MCF 10A (cell line): ENCODE measurements at regions of chr16 and their contacts with region 1.

Region 1: GRCh38 chr16:69105489-69106361 is at the start of gene HAS3:
- DNase-seq: peak; percentile 81
- H3K4me3 Mint-ChIP-seq: peak within 1 kb of the TSS; percentile 96
- H3K27ac Mint-ChIP-seq: peak within 1 kb of the TSS; percentile 84
- H3K4me1 Mint-ChIP-seq: peaks cover 15% of the 10 kb centered on the region
- H3K27me3 Mint-ChIP-seq: no peaks in the 10 kb centered on the region
- CTCF ChIP-seq: peak; percentile 55
- total RNA-seq, gene HAS3: 0.72 and 2.8 TPM in 2 replicates

Region 2: GRCh38 chr16:68843482-68844210 is 262.1 kb before region 1 on chr16 and contains the start of gene TANGO6:
- CTCF ChIA-PET with region 1: interaction called, 12 read pairs
- POLR2A ChIA-PET with region 1: interaction called, 4 read pairs
- intact Hi-C with region 1: loop called (anchors 1 kb)
- DNase-seq: peak; percentile 79
- H3K4me3 Mint-ChIP-seq: peak within 1 kb of the TSS; percentile 82
- H3K27ac Mint-ChIP-seq: peak within 1 kb of the TSS; percentile 82
- H3K4me1 Mint-ChIP-seq: peaks cover 10% of the 10 kb centered on the region
- H3K27me3 Mint-ChIP-seq: no peaks in the 10 kb centered on the region
- CTCF ChIP-seq: no peak
- total RNA-seq, gene TANGO6: 14.6 and 21.8 TPM in 2 replicates

Region 3: DNA sequence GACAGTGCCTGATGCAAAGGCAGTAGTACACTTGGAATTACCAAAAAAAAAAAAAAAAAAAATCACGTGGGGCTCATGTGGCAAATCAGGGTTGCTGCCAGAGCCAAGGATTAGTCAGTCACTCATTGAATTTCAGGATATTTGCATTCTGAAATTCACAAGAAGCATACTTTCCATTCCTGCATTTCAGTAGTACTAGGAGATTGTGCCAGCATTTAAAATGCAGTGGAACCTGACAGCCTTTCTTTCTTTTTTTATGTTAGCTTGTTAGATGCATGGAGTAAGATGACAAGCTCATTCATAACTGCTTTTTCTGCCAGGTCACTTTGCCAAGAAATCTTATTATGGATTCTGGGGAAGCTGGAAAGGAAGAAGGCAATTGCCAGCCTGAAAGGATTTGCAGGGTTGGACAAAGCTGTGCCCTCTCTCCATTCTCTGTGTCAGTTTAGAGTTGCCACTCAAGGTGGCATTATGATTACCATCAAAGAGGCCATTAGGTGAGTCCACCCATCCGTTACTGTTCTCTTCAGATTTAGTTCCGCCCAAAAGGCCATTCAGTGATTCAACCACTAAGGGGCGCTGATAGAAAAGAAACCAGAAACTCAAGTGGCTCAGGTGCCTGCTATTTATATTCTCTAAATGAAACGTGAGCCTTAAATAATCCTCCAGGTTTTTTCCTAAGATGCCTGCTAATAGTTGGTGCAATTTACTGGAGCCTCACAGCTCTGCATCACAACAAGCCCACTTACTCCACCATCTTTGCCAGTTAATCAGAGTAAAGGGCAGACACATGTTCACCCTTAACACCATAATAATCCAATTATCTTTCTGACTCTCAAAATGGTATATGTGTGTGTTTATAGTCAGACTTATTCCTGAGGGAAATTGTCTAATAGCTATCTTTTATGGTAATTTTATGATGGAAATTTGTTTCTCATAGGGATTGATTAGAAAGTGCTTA is 203.4 kb before region 1 on chr16:
- CTCF ChIA-PET with region 1: interaction called, 47 read pairs
- POLR2A ChIA-PET with region 1: interaction called, 6 read pairs
- intact Hi-C with region 1: loop called (anchors 1 kb)
- DNase-seq: peak; percentile 81
- H3K4me3 Mint-ChIP-seq: no peak overlapping the region
- H3K27ac Mint-ChIP-seq: no peak overlapping the region
- H3K4me1 Mint-ChIP-seq: no peaks in the 10 kb centered on the region
- H3K27me3 Mint-ChIP-seq: no peaks in the 10 kb centered on the region
- CTCF ChIP-seq: peak; percentile 76

Region 4: GRCh38 chr16:68995011-68995504 is 110.7 kb before region 1 on chr16:
- CTCF ChIA-PET with region 1: interaction called, 3 read pairs
- POLR2A ChIA-PET with region 1: interaction called, 8 read pairs
- intact Hi-C with region 1: loop called (anchors 1 kb)
- DNase-seq: peak; percentile 89
- H3K4me3 Mint-ChIP-seq: peak overlapping the region; percentile 33
- H3K27ac Mint-ChIP-seq: peak overlapping the region; percentile 93
- H3K4me1 Mint-ChIP-seq: peaks cover 38% of the 10 kb centered on the region
- H3K27me3 Mint-ChIP-seq: no peaks in the 10 kb centered on the region
- CTCF ChIP-seq: peak; percentile 34

Region 5: DNA sequence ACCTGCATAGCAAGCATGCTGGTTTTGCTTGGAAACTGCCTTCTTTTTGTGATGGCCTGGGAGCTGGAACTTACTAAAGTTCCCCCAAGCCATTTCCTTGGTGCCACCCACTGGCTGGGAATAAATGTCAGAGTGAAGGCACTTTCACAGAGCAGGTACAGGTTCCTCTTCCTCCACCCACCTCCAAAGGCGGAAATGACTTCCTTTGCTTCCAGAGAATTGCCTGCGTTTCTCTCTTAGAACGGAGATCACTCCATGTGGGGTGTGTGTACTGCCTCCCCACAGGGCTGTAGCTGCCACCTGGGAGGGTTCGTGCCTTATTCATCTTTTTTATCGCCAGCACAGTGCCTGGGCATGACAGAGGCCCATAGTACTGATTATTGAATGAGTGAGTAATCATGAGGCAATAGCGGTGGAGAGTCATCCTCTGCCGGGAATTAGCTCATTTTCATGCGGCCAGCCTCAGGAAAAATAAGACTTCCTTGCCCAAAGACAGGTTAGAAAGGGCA is 32.5 kb before region 1 on chr16:
- CTCF ChIA-PET with region 1: interaction called, 8 read pairs
- POLR2A ChIA-PET with region 1: interaction called, 12 read pairs
- intact Hi-C with region 1: no loop called
- DNase-seq: peak; percentile 96
- H3K4me3 Mint-ChIP-seq: peak overlapping the region; percentile 30
- H3K27ac Mint-ChIP-seq: peak overlapping the region; percentile 90
- H3K4me1 Mint-ChIP-seq: peaks cover 26% of the 10 kb centered on the region
- H3K27me3 Mint-ChIP-seq: no peaks in the 10 kb centered on the region
- CTCF ChIP-seq: no peak

Region 6: DNA sequence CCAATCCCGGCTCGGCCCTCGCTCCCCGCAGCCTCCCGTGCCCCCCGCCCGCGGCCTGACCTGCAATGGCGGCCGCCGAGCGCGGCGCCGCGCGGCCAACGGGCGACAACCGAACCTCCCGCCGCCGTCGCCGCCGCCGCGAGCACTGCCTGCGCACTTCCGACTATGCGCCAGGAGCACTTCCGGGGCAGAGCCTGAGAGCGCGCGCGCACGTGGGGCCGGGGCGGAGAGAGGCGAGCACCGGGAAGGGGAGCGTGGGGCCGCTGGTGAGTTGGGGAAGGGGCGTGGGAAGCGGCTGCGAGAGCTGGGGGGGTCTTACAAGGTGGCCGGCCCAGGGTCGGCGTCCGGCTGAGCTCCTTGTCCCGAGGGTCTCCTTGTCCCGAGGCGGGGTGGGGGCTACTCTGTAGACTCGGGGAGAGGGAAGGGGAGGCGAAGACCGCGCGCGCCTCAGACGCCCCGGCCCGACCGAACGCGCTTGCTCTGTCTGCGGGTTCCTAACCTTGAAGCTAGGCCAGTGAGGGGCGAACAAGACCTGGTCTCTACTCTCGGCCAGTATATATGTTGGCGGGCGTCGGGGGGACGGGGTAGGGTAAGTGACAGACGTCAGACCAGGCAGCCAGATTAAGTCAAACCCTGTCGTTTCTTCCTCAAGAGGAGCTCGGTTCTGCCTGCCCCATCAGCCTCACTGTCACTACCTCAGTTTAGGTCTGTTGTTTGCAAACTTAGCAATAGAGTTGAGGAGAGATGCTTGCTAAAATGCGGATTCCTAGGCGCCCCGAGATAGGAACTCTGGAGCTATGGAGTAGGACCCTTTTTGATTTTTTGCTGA is 26.9 kb after region 1 on chr16 and contains the starts of genes CHTF8 and UTP4:
- CTCF ChIA-PET with region 1: no interaction called
- POLR2A ChIA-PET with region 1: interaction called, 10 read pairs
- intact Hi-C with region 1: no loop called
- DNase-seq: peak; percentile 76
- H3K4me3 Mint-ChIP-seq: peak within 1 kb of the TSS; percentile 87
- H3K27ac Mint-ChIP-seq: peak within 1 kb of the TSS; percentile 87
- H3K4me1 Mint-ChIP-seq: peaks cover 20% of the 10 kb centered on the region
- H3K27me3 Mint-ChIP-seq: no peaks in the 10 kb centered on the region
- CTCF ChIP-seq: no peak
- total RNA-seq, gene CHTF8: 107 and 113 TPM in 2 replicates
- total RNA-seq, gene UTP4: 77.1 and 97.1 TPM in 2 replicates